ENCODE measurements at regions of chr4 and their contacts with region 1.

Region 1: GRCh38 chr4:121726642-121727268 is 30.0 kb upstream of the ANXA5 start:
- DNase-seq: peak in 3 of 14 experiments; percentile 66 to 68 (median 67)
- ATAC-seq: peak; percentile 85
- H3K4me3 ChIP-seq: no peak overlapping the region
- H3K4me3 Mint-ChIP-seq: no peak overlapping the region
- H3K27ac ChIP-seq: no peak overlapping the region
- H3K27ac Mint-ChIP-seq: no peak overlapping the region
- H3K4me1 ChIP-seq: no peaks in the 10 kb centered on the region
- H3K4me1 Mint-ChIP-seq: no peaks in the 10 kb centered on the region
- H3K27me3 ChIP-seq: no peaks in the 10 kb centered on the region
- H3K27me3 Mint-ChIP-seq: no peaks in the 10 kb centered on the region
- CTCF ChIP-seq: peak; percentile 69

Region 2: GRCh38 chr4:121370729-121371325 is 355.9 kb before region 1 on chr4:
- CTCF ChIA-PET with region 1: no interaction called
- POLR2A ChIA-PET with region 1: no interaction called
- intact Hi-C with region 1: loop called (anchors 2 to 5 kb)
- DNase-seq: peak in 4 of 14 experiments; percentile 21 to 36 (median 35)
- ATAC-seq: no peak
- H3K4me3 ChIP-seq: no peak overlapping the region
- H3K4me3 Mint-ChIP-seq: no peak overlapping the region
- H3K27ac ChIP-seq: no peak overlapping the region
- H3K27ac Mint-ChIP-seq: no peak overlapping the region
- H3K4me1 ChIP-seq: no peaks in the 10 kb centered on the region
- H3K4me1 Mint-ChIP-seq: no peaks in the 10 kb centered on the region
- H3K27me3 ChIP-seq: peaks cover 6 to 11% of the 10 kb centered on the region in 2 experiments
- H3K27me3 Mint-ChIP-seq: peaks cover 20% of the 10 kb centered on the region
- CTCF ChIP-seq: peak; percentile 64